GM12878 (cell line): ENCODE measurements at regions of chr2 and their contacts with region 1.

Region 1: GRCh38 chr2:69914170-69914960 is 544 bp upstream of the MXD1 start:
- DNase-seq: peak; percentile 100
- ATAC-seq: peak; percentile 93
- H3K4me3 ChIP-seq: peak overlapping the region; percentile 68
- H3K27ac ChIP-seq: peak overlapping the region; percentile 86
- H3K4me1 ChIP-seq: peaks cover 8% of the 10 kb centered on the region; the same call in 1 of the 2 replicates
- H3K27me3 ChIP-seq: no peaks in the 10 kb centered on the region
- CTCF ChIP-seq: peak in 1 of 3 experiments; percentile 48; a peak in 2 of 6 replicates
- EP300 ChIP-seq: no peak
- POLR2A ChIP-seq: peak; percentile 85
- RAD21 ChIP-seq: 0 out of 2 replicates have a peak, but pooled peaks have one; percentile 1

Region 2: GRCh38 chr2:68943581-68944568 is 970.5 kb before region 1 on chr2:
- CTCF ChIA-PET with region 1: no interaction called
- POLR2A ChIA-PET with region 1: no interaction called
- RAD21 ChIA-PET with region 1: no interaction called
- SMC1A ChIA-PET with region 1: no interaction called
- in situ Hi-C with region 1: no loop called
- intact Hi-C with region 1: no loop called
- DNase-seq: no peak
- ATAC-seq: peak; percentile 83
- H3K4me3 ChIP-seq: no peak overlapping the region
- H3K27ac ChIP-seq: no peak overlapping the region
- H3K4me1 ChIP-seq: no peaks in the 10 kb centered on the region
- H3K27me3 ChIP-seq: peaks cover 0 to 3% of the 10 kb centered on the region in 2 experiments; a peak in 2 of 4 replicates
- CTCF ChIP-seq: peak; percentile 67 to 84 (median 72)
- EP300 ChIP-seq: no peak
- POLR2A ChIP-seq: no peak
- RAD21 ChIP-seq: peak; percentile 63

Region 3: DNA sequence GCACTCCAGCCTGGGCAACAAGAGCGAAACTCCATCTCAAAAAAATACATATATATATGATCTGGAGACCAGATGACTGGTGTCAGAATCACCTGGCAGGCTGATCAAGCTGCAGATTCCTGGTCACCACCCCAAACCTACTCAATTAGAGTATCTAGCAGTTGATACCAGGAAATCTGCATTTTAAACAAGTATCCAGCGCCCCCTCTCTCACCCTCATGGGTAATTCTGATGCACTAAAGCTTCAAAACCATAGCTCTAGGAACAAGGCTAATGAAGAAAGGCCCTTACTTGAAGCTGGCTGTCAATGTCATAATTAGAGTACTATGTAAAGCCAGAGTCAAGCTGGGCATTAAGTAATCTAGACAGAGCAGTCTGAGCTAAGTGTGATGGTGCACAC is 147.9 kb after region 1 on chr2:
- CTCF ChIA-PET with region 1: interaction called, 16 read pairs
- POLR2A ChIA-PET with region 1: interaction called, 75 read pairs
- RAD21 ChIA-PET with region 1: interaction called, 154 read pairs
- SMC1A ChIA-PET with region 1: interaction called, 126 read pairs
- in situ Hi-C with region 1: no loop called
- intact Hi-C with region 1: no loop called
- DNase-seq: no peak
- ATAC-seq: no peak
- H3K4me3 ChIP-seq: no peak overlapping the region
- H3K27ac ChIP-seq: no peak overlapping the region
- H3K4me1 ChIP-seq: no peaks in the 10 kb centered on the region
- H3K27me3 ChIP-seq: no peaks in the 10 kb centered on the region
- CTCF ChIP-seq: no peak
- EP300 ChIP-seq: no peak
- POLR2A ChIP-seq: no peak
- RAD21 ChIP-seq: peak; percentile 11; the same call in 1 of the 2 replicates

Region 4: DNA sequence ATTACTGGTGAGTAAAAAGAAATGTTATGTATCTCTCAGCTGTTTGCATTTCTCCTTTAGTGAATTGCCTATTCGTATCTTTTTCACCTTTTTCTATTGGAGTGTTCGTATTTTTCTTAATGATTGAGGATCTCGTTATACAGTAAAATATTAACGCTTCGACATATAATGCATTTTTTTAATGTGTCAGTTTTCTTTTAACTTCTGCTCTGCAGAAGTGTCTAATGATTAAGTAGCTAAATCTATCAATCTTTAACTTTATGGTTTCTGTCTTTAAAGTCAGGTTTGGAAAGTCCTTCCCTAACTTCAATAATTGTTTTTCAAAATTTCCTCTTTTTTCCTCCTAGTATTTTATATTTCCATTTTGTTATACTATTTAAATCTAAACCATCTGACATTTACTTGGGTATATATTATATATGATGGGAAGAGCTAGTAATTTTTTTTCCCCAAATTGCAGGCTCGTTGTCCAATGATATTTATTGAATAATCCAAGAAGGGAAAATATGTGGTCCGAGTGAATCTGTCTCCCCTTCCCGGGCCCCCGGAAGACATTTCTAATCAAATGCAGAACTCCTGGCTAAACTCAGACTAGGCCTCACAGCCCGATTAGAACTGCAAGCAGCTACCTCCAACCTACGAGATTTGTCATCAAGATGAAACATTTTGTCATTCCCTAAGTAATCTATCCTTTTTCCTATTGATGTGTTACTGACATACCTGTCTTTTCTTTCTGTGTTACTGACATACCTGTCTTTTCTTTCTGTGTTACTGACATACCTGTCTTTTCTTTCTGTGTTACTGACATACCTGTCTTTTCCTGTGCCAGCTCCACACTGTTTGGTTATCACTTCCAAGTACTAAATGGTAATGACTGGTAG is 190.1 kb after region 1 on chr2:
- CTCF ChIA-PET with region 1: interaction called, 6 read pairs
- POLR2A ChIA-PET with region 1: interaction called, 10 read pairs
- RAD21 ChIA-PET with region 1: interaction called, 25 read pairs
- SMC1A ChIA-PET with region 1: interaction called, 14 read pairs
- in situ Hi-C with region 1: no loop called
- intact Hi-C with region 1: no loop called
- DNase-seq: no peak
- ATAC-seq: peak; percentile 17; the same call in 2 of the 3 replicates
- H3K4me3 ChIP-seq: peak overlapping the region; percentile 53
- H3K27ac ChIP-seq: peak overlapping the region; percentile 97
- H3K4me1 ChIP-seq: peaks cover 38% of the 10 kb centered on the region
- H3K27me3 ChIP-seq: no peaks in the 10 kb centered on the region
- CTCF ChIP-seq: no peak
- EP300 ChIP-seq: no peak
- POLR2A ChIP-seq: no peak
- RAD21 ChIP-seq: 0 out of 2 replicates have a peak, but pooled peaks have one; percentile 3

Region 5: GRCh38 chr2:70137519-70137918 is 223.2 kb after region 1 on chr2:
- CTCF ChIA-PET with region 1: interaction called, 111 read pairs
- POLR2A ChIA-PET with region 1: interaction called, 60 read pairs
- RAD21 ChIA-PET with region 1: interaction called, 132 read pairs
- SMC1A ChIA-PET with region 1: interaction called, 116 read pairs
- in situ Hi-C with region 1: no loop called
- intact Hi-C with region 1: loop called (anchors 1 kb)
- DNase-seq: no peak
- ATAC-seq: no peak
- H3K4me3 ChIP-seq: no peak overlapping the region
- H3K27ac ChIP-seq: no peak overlapping the region
- H3K4me1 ChIP-seq: peaks cover 48% of the 10 kb centered on the region
- H3K27me3 ChIP-seq: no peaks in the 10 kb centered on the region
- CTCF ChIP-seq: no peak
- EP300 ChIP-seq: no peak
- POLR2A ChIP-seq: no peak
- RAD21 ChIP-seq: no peak

Region 6: DNA sequence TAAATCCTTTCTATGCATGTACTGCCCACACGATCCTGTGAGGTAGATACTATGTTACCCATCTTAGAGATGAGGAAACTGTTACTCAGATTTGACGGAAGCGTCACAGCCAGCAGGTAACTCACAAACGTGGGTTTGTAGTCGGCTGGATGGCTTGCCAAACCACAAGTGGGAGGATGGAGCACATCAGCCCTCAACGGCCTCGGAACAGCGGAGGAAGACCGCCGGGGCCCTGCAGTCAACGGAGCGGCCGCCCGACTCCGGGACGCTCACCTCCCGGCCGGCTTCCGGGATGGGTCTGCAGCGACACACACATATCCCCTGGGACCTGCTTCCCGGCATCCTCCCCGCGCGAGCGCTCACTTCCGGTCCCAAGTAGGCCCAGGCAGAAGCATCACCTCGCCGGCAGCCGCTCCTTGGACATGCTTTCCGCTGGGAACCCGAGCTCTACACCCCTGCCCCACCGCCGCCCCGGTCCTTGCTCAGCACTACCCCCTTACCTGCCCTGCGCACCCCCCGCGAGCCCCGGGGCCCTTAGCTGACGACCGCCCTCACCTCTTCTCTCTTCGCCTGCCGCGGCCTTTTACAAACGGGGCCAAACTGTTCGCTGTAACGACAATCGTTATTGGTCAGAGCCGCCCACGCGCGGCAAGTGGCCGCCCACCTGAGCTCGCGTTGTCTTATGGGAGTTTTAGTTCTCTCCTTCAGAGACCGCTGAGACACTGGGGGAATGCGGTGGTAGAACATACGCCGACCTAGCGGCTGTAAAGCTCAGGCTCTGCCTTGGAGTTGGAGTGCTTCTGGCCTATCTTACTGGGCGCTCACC is 276.3 kb after region 1 on chr2 and contains the start of gene C2orf42:
- CTCF ChIA-PET with region 1: interaction called, 25 read pairs
- POLR2A ChIA-PET with region 1: interaction called, 7 read pairs
- RAD21 ChIA-PET with region 1: interaction called, 27 read pairs
- SMC1A ChIA-PET with region 1: interaction called, 14 read pairs
- in situ Hi-C with region 1: no loop called
- intact Hi-C with region 1: loop called (anchors 2 kb)
- DNase-seq: peak; percentile 97
- ATAC-seq: peak; percentile 94
- H3K4me3 ChIP-seq: peak within 1 kb of the TSS; percentile 72
- H3K27ac ChIP-seq: peak within 1 kb of the TSS; percentile 88
- H3K4me1 ChIP-seq: no peaks in the 10 kb centered on the region; the same call in 1 of the 2 replicates
- H3K27me3 ChIP-seq: no peaks in the 10 kb centered on the region
- CTCF ChIP-seq: peak; percentile 1 to 14 (median 7); a peak in 2 of 6 replicates
- EP300 ChIP-seq: peak in 1 of 2 experiments; percentile 12; a peak in 1 of 4 replicates
- POLR2A ChIP-seq: peak; percentile 95
- RAD21 ChIP-seq: 0 out of 2 replicates have a peak, but pooled peaks have one; percentile 15
- polyA plus RNA-seq, gene C2orf42: 5.5 to 7.3 TPM